GM10248 (cell line): ENCODE measurements at regions of chr6 and their contacts with region 1.

Region 1: GRCh38 chr6:1396952-1397868 is 7.8 kb downstream of the FOXF2 start:
- DNase-seq: peak; percentile 85
- CTCF ChIP-seq: peak; percentile 82

Region 2: DNA sequence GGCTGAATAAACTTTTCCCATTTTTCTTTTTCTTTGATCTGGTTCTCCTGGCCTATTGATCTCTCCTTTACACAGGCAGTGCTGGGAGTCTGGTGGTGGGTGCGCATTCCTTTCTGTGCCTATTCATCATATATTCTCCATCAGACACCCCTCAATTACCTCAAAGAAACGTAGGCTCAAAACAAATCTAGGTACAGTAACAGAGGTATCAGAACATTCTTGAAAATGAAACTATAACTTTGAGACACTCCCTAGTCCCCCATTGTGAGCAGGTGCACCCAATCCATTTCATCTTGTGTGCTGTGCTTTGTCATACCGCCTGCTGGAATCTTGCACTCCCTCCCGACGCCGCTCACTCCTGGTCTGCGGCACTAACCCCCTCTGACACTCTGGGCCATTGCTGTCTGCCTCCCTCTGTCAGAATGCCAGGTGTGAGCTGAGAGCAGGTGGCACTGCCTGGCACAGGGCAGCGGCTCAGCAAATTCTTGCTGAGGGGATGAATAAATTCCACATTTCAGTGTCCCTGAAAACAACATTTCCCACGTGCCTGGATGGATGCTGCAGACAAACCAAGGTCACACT is 400.8 kb before region 1 on chr6:
- CTCF ChIA-PET with region 1: no interaction called
- POLR2A ChIA-PET with region 1: no interaction called
- DNase-seq: no peak
- CTCF ChIP-seq: no peak

Region 3: DNA sequence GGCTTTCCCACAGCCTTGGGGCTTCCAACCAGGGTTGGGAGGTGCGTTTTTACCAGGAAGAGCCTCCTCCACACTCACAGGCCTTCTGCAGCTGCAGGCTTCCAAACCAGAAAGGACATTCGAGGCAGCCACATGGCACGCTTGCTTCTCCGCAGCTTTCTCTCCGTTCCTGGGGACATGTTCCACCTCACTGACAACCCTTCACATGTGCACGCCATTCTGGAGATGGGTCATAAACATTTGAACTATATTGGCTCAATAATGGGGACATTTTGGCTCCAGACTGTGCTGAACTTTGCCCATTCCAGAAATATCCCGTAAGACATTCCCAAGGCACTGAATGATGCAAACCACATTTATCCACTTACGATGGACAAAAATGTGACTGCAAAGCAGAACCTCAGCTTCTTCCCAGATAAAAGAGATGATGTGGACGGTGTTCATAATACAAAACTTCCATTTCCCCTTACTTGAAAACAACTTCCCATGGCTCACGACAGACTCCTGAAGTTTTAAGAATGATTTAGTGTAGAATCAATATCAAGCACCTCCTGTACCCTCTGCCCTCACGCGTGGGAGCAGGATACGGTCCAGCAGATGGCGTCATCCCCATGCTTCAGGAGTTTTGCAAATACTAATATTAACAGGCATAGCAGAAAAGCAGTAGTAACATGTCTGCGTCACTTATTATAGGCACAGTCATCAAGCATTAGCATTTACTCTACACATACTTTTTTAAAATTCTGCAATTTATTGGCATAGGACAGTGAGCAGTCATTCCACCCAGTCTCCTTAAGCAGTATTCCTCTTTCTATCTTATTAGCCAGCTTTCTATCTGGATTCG is 33.3 kb before region 1 on chr6:
- CTCF ChIA-PET with region 1: no interaction called
- POLR2A ChIA-PET with region 1: no interaction called
- DNase-seq: no peak
- CTCF ChIP-seq: peak; percentile 14

Region 4: DNA sequence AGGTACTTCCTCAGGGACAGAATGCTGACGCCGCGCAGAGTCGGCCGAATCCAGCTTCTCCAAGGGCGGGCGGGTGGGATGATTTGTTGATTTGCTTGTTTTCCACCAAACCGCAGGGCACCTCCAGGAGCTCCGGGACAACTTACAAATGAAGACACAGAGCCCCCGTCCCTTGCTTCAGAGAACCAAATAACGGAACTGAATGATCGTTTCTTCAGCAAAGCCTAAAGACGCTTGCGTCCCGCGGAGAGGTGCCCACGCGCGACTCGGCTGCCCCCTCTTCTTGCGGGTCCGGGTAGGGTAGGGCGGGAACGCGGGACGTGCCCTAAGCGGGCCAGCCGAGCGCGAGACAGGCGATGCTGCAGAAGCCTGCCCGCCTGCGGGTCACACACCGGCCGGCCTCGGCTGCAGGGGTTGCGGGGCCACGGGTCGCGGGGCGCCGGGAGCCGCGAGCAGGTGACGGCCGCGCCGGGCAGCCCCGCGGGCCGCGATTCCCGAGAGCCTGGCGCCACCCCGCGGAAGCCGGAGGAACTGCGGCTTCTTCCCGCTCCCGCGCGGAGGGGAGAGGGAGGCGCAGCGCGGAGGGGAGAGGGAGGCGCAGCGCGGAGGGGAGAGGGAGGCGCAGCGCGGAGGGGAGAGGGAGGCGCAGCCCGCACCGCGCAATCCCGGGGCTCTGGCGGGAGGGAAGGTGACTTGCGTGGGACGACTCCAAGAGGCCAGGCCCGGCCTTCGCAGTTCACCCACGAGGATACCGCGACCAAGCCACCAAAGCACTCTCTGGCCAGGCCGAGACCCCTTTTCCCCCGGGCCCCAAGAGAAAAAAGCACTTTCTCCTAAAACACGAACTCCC is 15.5 kb before region 1 on chr6:
- CTCF ChIA-PET with region 1: interaction called, 10 read pairs
- POLR2A ChIA-PET with region 1: no interaction called
- DNase-seq: peak; percentile 76
- CTCF ChIP-seq: peak; percentile 89

Region 5: GRCh38 chr6:1424306-1424928 is 27.2 kb after region 1 on chr6:
- CTCF ChIA-PET with region 1: interaction called, 13 read pairs
- POLR2A ChIA-PET with region 1: no interaction called
- DNase-seq: peak; percentile 57
- CTCF ChIP-seq: peak; percentile 67

Region 6: DNA sequence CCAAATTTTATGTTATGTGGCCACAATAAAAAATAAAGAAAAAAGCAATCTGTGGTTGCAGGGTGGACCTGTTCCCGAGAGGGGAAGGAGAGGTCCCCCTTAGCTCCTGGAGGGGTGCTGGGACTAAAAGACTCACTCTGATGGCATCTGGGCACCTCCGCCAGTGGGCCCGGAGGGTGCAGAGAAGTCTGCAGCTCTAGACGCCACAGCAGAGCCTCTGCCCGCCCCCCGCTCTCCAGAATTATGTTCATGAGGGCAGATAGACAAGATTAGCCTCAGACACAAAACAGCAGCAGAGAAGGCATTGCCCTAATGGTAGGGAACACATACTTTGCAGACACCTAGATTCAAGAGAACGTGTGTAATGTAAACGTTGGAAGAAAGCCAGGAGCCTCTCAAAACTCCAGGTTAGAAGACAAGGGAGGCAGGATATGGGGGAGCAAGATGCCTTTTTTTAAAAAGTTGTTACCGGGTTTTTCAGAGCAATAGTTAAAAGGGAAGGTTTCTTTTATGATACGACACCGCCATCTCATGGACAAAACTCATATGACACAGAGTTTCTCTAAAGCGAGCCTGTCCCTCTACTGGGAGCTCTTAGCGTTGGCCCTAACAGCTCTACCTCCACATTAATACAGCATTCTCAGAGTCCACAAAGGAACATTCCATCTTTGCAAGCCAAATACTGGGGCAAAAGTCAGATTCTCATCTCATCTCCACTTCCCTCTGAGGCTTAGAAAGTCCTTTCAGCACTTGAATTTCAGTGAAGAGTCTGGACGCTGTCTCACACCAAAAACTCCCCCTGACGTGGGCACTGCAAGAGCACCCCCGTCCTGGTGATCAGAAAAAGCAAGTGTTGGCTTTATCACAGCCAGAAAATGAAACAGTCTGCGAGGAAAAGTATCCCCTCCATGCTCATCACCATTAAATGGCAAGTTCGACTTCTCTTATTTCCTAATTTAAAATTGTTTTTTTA is 39.4 kb after region 1 on chr6:
- CTCF ChIA-PET with region 1: interaction called, 11 read pairs
- POLR2A ChIA-PET with region 1: no interaction called
- DNase-seq: peak; percentile 83
- CTCF ChIP-seq: peak; percentile 57